ENCODE measurements at regions of chrX and their contacts with region 1.

Region 1: DNA sequence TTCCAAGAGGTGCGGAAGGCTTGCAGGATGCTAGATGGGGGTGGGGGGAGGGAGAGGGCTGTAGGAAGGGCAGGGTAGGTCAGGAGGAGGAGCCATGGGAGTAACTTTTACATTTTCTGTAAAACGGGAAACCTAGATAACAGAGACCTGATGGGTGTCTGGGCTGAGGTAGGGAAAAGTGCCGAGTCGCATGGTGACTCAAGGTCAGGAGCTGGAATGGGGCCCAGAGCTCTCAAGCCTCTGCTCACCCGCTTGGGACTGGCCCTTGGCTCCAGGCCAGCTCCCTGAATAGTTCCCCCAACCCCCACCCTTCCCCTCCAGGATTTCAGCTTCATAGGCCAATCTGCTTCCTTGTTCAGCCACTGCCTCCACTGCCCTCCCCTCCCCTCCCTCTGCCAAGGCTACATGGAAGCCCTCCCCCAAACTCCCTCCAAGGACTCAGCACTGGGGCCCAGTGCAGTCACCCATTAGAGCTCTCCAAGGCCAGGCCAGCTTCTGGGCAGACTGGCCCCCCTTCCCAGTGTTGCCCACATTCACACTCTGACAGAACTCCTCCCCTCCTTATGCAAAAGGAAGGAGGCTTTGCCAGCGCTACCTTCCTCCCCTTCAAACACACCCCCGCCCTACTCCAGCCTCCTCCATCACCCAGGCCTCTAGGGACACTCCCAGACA is 43.6 kb downstream of the TSC22D3 start:
- DNase-seq: peak; percentile 87 to 94
- ATAC-seq: peak; percentile 69 to 81 (median 79)
- H3K4me3 ChIP-seq: no peak overlapping the region
- H3K27ac ChIP-seq: peak overlapping the region; percentile 81
- H3K4me1 ChIP-seq: peaks cover 61% of the 10 kb centered on the region
- H3K27me3 ChIP-seq: peaks cover 0 to 3% (median 0%) of the 10 kb centered on the region in 3 donors
- CTCF ChIP-seq: no peak

Region 2: GRCh38 chrX:107627838-107628661 is 103.9 kb before region 1 on chrX and contains the start of gene PRPS1:
- intact Hi-C with region 1: no loop called
- DNase-seq: peak; percentile 89 to 92
- ATAC-seq: peak; percentile 96 to 99 (median 96)
- H3K4me3 ChIP-seq: peak within 1 kb of the TSS; percentile 74
- H3K27ac ChIP-seq: peak within 1 kb of the TSS; percentile 85
- H3K4me1 ChIP-seq: no peaks in the 10 kb centered on the region
- H3K27me3 ChIP-seq: peaks cover 0 to 12% (median 0%) of the 10 kb centered on the region in 3 donors
- CTCF ChIP-seq: no peak
- total RNA-seq, gene PRPS1: 30.5 to 48.4 (median 43.2) TPM

Region 3: DNA sequence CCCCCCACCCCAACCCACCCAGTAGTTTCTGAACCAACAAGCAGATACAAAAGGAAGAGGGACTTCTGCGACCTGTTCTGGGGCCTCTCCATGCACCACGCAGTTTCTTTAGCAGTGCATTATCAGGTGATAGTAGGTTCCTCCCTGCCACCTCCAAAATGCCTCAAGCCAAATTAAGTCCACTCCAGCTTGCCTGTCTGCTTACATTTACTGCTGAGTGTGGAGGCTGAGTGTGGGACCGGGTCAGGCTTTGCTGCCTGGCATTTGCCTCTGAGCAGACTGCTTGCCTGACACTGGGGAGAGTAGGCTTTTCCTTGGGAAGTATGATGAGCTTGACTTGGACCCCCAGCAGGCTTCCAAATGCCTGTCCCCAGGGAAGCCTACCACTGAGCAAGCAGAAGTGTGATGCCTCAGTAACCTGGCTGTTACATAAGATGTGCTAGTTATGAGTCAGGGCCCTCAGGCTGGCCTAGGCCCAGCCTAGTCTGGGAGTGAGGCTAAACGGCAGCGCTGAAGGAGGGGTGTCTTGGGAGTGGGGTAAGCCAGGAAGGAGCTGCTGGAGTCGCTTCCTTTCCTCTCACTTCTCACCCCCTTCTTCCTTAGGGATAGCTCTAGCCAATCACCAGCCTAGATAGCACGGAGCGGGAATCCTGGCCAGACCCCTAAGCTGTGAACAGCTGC is 34.6 kb after region 1 on chrX:
- intact Hi-C with region 1: loop called (anchors 5 kb)
- DNase-seq: peak; percentile 64 to 82
- ATAC-seq: peak; percentile 79 to 92 (median 91)
- H3K4me3 ChIP-seq: no peak overlapping the region
- H3K27ac ChIP-seq: peak overlapping the region; percentile 42
- H3K4me1 ChIP-seq: peaks cover 12% of the 10 kb centered on the region
- H3K27me3 ChIP-seq: peaks cover 0 to 6% (median 0%) of the 10 kb centered on the region in 3 donors
- CTCF ChIP-seq: no peak

Region 4: GRCh38 chrX:107857799-107858198 is 125.8 kb after region 1 on chrX:
- intact Hi-C with region 1: no loop called
- DNase-seq: no peak
- ATAC-seq: no peak
- H3K4me3 ChIP-seq: no peak overlapping the region
- H3K27ac ChIP-seq: no peak overlapping the region
- H3K4me1 ChIP-seq: no peaks in the 10 kb centered on the region
- H3K27me3 ChIP-seq: peaks cover 0 to 21% (median 0%) of the 10 kb centered on the region in 3 donors
- CTCF ChIP-seq: no peak

Measured in psoas muscle (tissue), 8 donors.